GM12878 (cell line): ENCODE measurements at regions of chr3 and their contacts with region 1.

Region 1: DNA sequence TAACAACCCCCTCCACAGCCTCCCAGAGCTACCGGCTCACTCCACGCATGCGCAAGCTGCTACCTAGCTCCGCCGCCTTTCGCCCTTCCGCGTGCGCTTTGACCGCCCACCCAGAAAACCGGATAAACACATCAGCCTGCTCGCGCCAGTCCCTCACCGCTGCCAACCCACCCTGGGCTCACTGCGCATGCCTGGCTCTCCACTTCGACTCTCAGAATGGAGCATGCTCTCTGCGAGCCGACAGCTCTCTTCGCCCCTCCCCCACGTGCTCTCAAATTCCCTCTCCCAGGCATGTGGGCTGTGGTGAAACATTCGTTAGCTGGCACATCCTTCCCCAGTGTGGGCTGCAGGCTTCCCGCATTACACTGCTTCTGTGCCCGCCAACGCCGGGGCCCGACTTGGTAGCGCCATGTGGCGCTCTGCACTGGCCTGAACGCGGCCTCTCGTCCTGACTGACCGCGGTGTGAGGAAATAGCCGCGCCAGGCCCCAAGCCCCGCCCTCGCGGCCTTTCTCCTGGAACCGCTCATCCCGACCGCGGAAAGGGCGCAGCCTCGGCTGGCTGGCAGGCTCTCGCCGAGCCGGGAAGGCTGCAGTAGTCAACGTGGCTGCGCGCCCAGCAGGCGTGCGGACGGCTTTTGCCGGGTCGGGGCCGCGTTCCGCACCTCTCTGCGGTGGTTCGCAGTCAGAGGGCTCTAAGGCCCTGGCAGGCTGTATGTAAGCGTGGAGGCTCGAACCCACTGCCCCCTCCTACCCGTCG is 445 bp upstream of the MSL2 start:
- DNase-seq: peak; percentile 100
- ATAC-seq: peak; percentile 81
- H3K4me3 ChIP-seq: peak overlapping the region; percentile 69
- H3K27ac ChIP-seq: peak overlapping the region; percentile 99
- H3K4me1 ChIP-seq: peaks cover 9% of the 10 kb centered on the region
- H3K27me3 ChIP-seq: no peaks in the 10 kb centered on the region
- CTCF ChIP-seq: no peak
- EP300 ChIP-seq: no peak; a peak in 2 of 4 replicates
- POLR2A ChIP-seq: peak; percentile 89
- RAD21 ChIP-seq: no peak

Region 2: GRCh38 chr3:136177876-136178275 is 18.7 kb before region 1 on chr3:
- CTCF ChIA-PET with region 1: interaction called, 7 read pairs
- POLR2A ChIA-PET with region 1: interaction called, 5 read pairs
- RAD21 ChIA-PET with region 1: interaction called, 13 read pairs
- SMC1A ChIA-PET with region 1: interaction called, 6 read pairs
- in situ Hi-C with region 1: no loop called
- intact Hi-C with region 1: loop called (anchors 2 kb)
- DNase-seq: no peak
- ATAC-seq: no peak
- H3K4me3 ChIP-seq: no peak overlapping the region
- H3K27ac ChIP-seq: no peak overlapping the region
- H3K4me1 ChIP-seq: no peaks in the 10 kb centered on the region
- H3K27me3 ChIP-seq: no peaks in the 10 kb centered on the region
- CTCF ChIP-seq: no peak
- EP300 ChIP-seq: no peak
- POLR2A ChIP-seq: no peak
- RAD21 ChIP-seq: no peak

Region 3: GRCh38 chr3:136186344-136186743 is 10.2 kb before region 1 on chr3:
- CTCF ChIA-PET with region 1: interaction called, 7 read pairs
- POLR2A ChIA-PET with region 1: interaction called, 14 read pairs
- RAD21 ChIA-PET with region 1: interaction called, 7 read pairs
- SMC1A ChIA-PET with region 1: interaction called, 5 read pairs
- in situ Hi-C with region 1: no loop called
- intact Hi-C with region 1: no loop called
- DNase-seq: no peak
- ATAC-seq: peak; percentile 64
- H3K4me3 ChIP-seq: no peak overlapping the region; the same call in 1 of the 2 replicates
- H3K27ac ChIP-seq: no peak overlapping the region
- H3K4me1 ChIP-seq: peaks cover 10% of the 10 kb centered on the region; the same call in 1 of the 2 replicates
- H3K27me3 ChIP-seq: no peaks in the 10 kb centered on the region
- CTCF ChIP-seq: no peak
- EP300 ChIP-seq: no peak
- POLR2A ChIP-seq: no peak
- RAD21 ChIP-seq: no peak

Region 4: GRCh38 chr3:136250226-136250902 is 53.8 kb after region 1 on chr3 and contains the start of gene PCCB:
- CTCF ChIA-PET with region 1: interaction called, 11 read pairs
- POLR2A ChIA-PET with region 1: interaction called, 15 read pairs
- RAD21 ChIA-PET with region 1: interaction called, 12 read pairs
- SMC1A ChIA-PET with region 1: interaction called, 24 read pairs
- in situ Hi-C with region 1: loop called (anchors 5 kb)
- intact Hi-C with region 1: loop called (anchors 1 kb)
- DNase-seq: peak; percentile 76
- ATAC-seq: peak; percentile 99
- H3K4me3 ChIP-seq: peak within 1 kb of the TSS; percentile 66
- H3K27ac ChIP-seq: peak within 1 kb of the TSS; percentile 71
- H3K4me1 ChIP-seq: peaks cover 15% of the 10 kb centered on the region
- H3K27me3 ChIP-seq: no peaks in the 10 kb centered on the region
- CTCF ChIP-seq: peak; percentile 62 to 75 (median 75)
- EP300 ChIP-seq: 0 out of 4 replicates have a peak, but pooled peaks of 1 of the 2 experiments have one; percentile 25
- POLR2A ChIP-seq: peak; percentile 96
- RAD21 ChIP-seq: peak; percentile 56
- polyA plus RNA-seq, gene PCCB: 67.2 to 73.3 TPM

Region 5: DNA sequence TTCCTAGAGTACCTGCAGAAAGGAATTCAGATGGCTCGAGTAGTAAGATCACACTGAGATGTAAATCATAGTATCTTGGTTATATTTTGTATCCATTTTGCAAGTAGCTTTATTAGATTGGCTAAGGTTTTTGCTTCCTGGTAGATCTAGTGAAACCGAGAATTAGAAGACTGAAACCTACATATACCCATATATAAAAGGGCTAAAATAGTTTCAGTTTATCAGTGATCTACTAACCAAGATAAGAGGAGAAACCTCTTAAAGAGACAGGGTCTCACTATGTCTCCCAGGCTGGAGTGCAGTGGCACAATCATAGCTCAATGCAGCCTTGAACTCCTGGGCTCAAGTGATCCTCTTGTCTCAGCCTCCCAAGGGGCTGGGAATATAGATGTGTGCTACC is 188.9 kb after region 1 on chr3:
- CTCF ChIA-PET with region 1: no interaction called
- POLR2A ChIA-PET with region 1: no interaction called
- RAD21 ChIA-PET with region 1: interaction called, 3 read pairs
- SMC1A ChIA-PET with region 1: no interaction called
- in situ Hi-C with region 1: no loop called
- intact Hi-C with region 1: loop called (anchors 5 kb)
- DNase-seq: no peak
- ATAC-seq: peak; percentile 98
- H3K4me3 ChIP-seq: no peak overlapping the region
- H3K27ac ChIP-seq: no peak overlapping the region
- H3K4me1 ChIP-seq: peaks cover 8% of the 10 kb centered on the region; the same call in 1 of the 2 replicates
- H3K27me3 ChIP-seq: no peaks in the 10 kb centered on the region
- CTCF ChIP-seq: no peak
- EP300 ChIP-seq: no peak
- POLR2A ChIP-seq: no peak
- RAD21 ChIP-seq: no peak

Region 6: DNA sequence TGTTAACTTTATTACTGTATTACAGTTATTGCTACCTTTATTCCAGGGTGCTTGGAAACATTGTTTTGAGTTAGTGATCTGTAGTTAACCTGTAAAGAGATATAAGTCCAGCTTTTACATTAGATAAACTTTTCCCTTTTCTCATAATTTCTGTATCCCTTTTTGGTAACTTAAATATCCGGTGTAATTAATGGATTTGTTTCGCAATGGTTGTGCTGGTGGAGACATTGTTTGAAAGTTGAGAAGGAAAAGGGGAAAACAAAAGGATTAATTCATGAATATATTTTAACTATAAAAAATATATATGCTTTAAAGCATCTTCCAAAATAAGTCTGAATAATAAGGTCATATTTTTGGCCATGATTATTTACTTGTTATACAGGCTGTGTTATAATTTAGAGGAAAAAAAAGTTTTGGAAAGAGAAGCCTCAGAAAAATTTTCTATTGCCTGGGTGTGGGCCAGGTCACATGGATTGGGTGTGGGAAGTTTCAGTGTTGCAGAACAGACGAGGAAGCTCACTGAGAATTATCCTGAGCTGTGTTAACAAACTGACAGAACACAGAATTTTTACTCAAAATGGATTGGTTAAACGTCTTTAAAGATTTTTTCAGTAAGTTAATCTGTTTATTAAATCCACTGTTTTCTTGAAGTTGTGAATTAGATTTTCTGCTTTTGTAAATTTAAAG is 733.5 kb after region 1 on chr3:
- CTCF ChIA-PET with region 1: no interaction called
- POLR2A ChIA-PET with region 1: no interaction called
- RAD21 ChIA-PET with region 1: no interaction called
- SMC1A ChIA-PET with region 1: no interaction called
- in situ Hi-C with region 1: no loop called
- intact Hi-C with region 1: loop called (anchors 10 kb)
- DNase-seq: no peak
- ATAC-seq: no peak
- H3K4me3 ChIP-seq: no peak overlapping the region
- H3K27ac ChIP-seq: no peak overlapping the region; the same call in 1 of the 2 replicates
- H3K4me1 ChIP-seq: peaks cover 9% of the 10 kb centered on the region; the same call in 1 of the 2 replicates
- H3K27me3 ChIP-seq: no peaks in the 10 kb centered on the region
- CTCF ChIP-seq: no peak
- EP300 ChIP-seq: no peak
- POLR2A ChIP-seq: no peak
- RAD21 ChIP-seq: no peak